ENCODE measurements at regions of chr7 and their contacts with region 1.

Region 1: GRCh38 chr7:726084-726853 is at the start of gene DNAAF5:
- DNase-seq: peak; percentile 87 to 92 (median 89)
- ATAC-seq: peak; percentile 62 to 92 (median 88)
- H3K4me3 ChIP-seq: peak within 1 kb of the TSS; percentile 49 to 98 (median 78)
- H3K27ac ChIP-seq: peak within 1 kb of the TSS in 11 of 12 donors; percentile 50 to 83 (median 78)
- H3K4me1 ChIP-seq: peaks cover under 1 to 33% (median 21%) of the 10 kb centered on the region in 12 donors
- H3K27me3 ChIP-seq: no peaks in the 10 kb centered on the region
- CTCF ChIP-seq: peak in 1 of 12 donors; percentile 9
- POLR2A ChIP-seq: peak in 1 of 2 donors; percentile 52
- total RNA-seq, gene DNAAF5: 13.9 to 45.8 (median 23.7) TPM

Region 2: GRCh38 chr7:568031-568951 is 158.0 kb before region 1 on chr7:
- intact Hi-C with region 1: no loop called
- DNase-seq: peak in 4 of 5 donors; percentile 59 to 76 (median 71)
- ATAC-seq: peak; percentile 33 to 81 (median 62)
- H3K4me3 ChIP-seq: peak overlapping the region in 5 of 12 donors; percentile 11 to 31 (median 26)
- H3K27ac ChIP-seq: peak overlapping the region in 10 of 12 donors; percentile 23 to 83 (median 50)
- H3K4me1 ChIP-seq: peaks cover 0 to 40% (median 19%) of the 10 kb centered on the region in 12 donors
- H3K27me3 ChIP-seq: no peaks in the 10 kb centered on the region
- CTCF ChIP-seq: no peak
- POLR2A ChIP-seq: no peak

Region 3: GRCh38 chr7:644381-645305 is 81.6 kb before region 1 on chr7:
- intact Hi-C with region 1: loop called in 1 of 10 experiments (anchors 5 kb)
- DNase-seq: peak in 3 of 5 donors; percentile 34 to 75 (median 71)
- ATAC-seq: peak in 3 of 4 donors; percentile 75 to 77 (median 75)
- H3K4me3 ChIP-seq: peak overlapping the region in 1 of 12 donors; percentile 13
- H3K27ac ChIP-seq: peak overlapping the region in 11 of 12 donors; percentile 44 to 78 (median 64)
- H3K4me1 ChIP-seq: peaks cover 0 to 16% (median 4%) of the 10 kb centered on the region in 12 donors
- H3K27me3 ChIP-seq: no peaks in the 10 kb centered on the region
- CTCF ChIP-seq: no peak
- POLR2A ChIP-seq: peak in 1 of 2 donors; percentile 39

Region 4: GRCh38 chr7:650339-651031 is 75.8 kb before region 1 on chr7:
- intact Hi-C with region 1: loop called in 2 of 10 experiments (anchors 5 kb)
- DNase-seq: peak; percentile 78 to 92 (median 85)
- ATAC-seq: peak; percentile 92 to 98 (median 97)
- H3K4me3 ChIP-seq: peak overlapping the region in 6 of 12 donors; percentile 12 to 28 (median 25)
- H3K27ac ChIP-seq: peak overlapping the region; percentile 18 to 94 (median 78)
- H3K4me1 ChIP-seq: peaks cover 0 to 14% (median 2%) of the 10 kb centered on the region in 12 donors
- H3K27me3 ChIP-seq: no peaks in the 10 kb centered on the region
- CTCF ChIP-seq: no peak
- POLR2A ChIP-seq: no peak